ENCODE measurements at regions of chr9 and their contacts with region 1.

Region 1: GRCh38 chr9:134171316-134172197 is 7.2 kb upstream of the RNU6ATAC start:
- DNase-seq: peak; percentile 69
- ATAC-seq: peak; percentile 47
- H3K4me3 ChIP-seq: no peak overlapping the region
- H3K27ac ChIP-seq: peak overlapping the region; percentile 58
- H3K4me1 ChIP-seq: peaks cover 10% of the 10 kb centered on the region
- H3K27me3 ChIP-seq: no peaks in the 10 kb centered on the region
- CTCF ChIP-seq: no peak

Region 2: GRCh38 chr9:133371261-133371711 is 800.3 kb before region 1 on chr9:
- intact Hi-C with region 1: no loop called
- DNase-seq: no peak
- ATAC-seq: no peak
- H3K4me3 ChIP-seq: no peak overlapping the region
- H3K27ac ChIP-seq: peak overlapping the region; percentile 55
- H3K4me1 ChIP-seq: peaks cover 66% of the 10 kb centered on the region
- H3K27me3 ChIP-seq: no peaks in the 10 kb centered on the region
- CTCF ChIP-seq: no peak

Region 3: DNA sequence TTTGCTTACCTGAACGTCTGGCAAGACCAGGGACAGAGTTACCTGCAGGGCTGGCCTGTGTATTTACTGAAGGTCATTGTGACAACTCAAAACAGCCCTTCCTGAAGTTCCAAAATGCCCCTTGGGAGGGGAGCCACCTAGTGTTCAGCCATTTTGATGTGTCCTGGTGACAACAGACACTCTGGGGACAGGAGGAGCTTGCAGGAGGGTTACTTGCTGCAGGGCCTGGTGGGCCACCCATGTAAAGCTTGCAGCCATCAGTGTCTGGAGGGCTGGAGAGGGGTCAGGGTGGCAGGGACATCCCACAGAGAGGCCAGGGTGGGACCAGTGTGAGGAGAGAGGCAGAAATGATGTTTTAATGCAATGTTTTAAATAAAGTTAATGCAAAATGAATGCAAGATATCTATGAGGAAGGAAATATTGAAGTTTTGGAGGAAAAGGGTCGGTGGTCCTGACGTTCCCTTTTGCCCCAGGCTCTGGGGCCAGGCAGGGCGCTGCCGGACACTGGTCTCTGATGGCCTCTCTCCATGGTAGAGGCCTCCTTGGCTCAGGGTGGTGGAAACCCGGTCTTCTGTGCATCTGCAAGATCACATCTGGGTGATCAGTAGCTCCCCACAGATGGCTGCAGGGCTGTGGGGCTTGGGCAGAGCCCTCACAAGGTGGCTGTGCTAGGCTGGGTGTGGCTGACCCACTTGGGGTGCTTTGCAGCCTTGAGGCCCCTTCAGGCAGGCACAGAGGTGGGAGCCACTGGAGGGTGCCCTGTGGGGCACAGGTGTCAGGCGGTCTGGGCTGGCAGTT is 46.5 kb after region 1 on chr9:
- intact Hi-C with region 1: no loop called
- DNase-seq: peak; percentile 40
- ATAC-seq: no peak
- H3K4me3 ChIP-seq: no peak overlapping the region
- H3K27ac ChIP-seq: no peak overlapping the region
- H3K4me1 ChIP-seq: peaks cover 23% of the 10 kb centered on the region
- H3K27me3 ChIP-seq: no peaks in the 10 kb centered on the region
- CTCF ChIP-seq: no peak

Region 4: GRCh38 chr9:134333234-134333873 is 161.8 kb after region 1 on chr9:
- intact Hi-C with region 1: loop called (anchors 5 kb)
- DNase-seq: no peak
- ATAC-seq: no peak
- H3K4me3 ChIP-seq: no peak overlapping the region
- H3K27ac ChIP-seq: no peak overlapping the region
- H3K4me1 ChIP-seq: peaks cover 72% of the 10 kb centered on the region
- H3K27me3 ChIP-seq: no peaks in the 10 kb centered on the region
- CTCF ChIP-seq: no peak

Region 5: GRCh38 chr9:134443168-134444037 is 271.8 kb after region 1 on chr9:
- intact Hi-C with region 1: loop called (anchors 2 kb)
- DNase-seq: peak; percentile 93
- ATAC-seq: peak; percentile 93
- H3K4me3 ChIP-seq: no peak overlapping the region
- H3K27ac ChIP-seq: no peak overlapping the region
- H3K4me1 ChIP-seq: peaks cover 26% of the 10 kb centered on the region
- H3K27me3 ChIP-seq: no peaks in the 10 kb centered on the region
- CTCF ChIP-seq: peak; percentile 98